Breast epithelium (tissue), 4 donors: ENCODE measurements at regions of chr3 and their contacts with region 1.

Region 1: GRCh38 chr3:54454806-54455205 is 332.5 kb downstream of the CACNA2D3 start:
- DNase-seq: no peak
- H3K4me3 ChIP-seq: no peak overlapping the region
- H3K27ac ChIP-seq: no peak overlapping the region
- H3K4me1 ChIP-seq: no peaks in the 10 kb centered on the region
- H3K27me3 ChIP-seq: no peaks in the 10 kb centered on the region
- CTCF ChIP-seq: no peak
- POLR2A ChIP-seq: no peak

Region 2: GRCh38 chr3:54270816-54271517 is 183.8 kb before region 1 on chr3:
- intact Hi-C with region 1: no loop called
- DNase-seq: no peak
- H3K4me3 ChIP-seq: no peak overlapping the region
- H3K27ac ChIP-seq: no peak overlapping the region
- H3K4me1 ChIP-seq: no peaks in the 10 kb centered on the region
- H3K27me3 ChIP-seq: no peaks in the 10 kb centered on the region
- CTCF ChIP-seq: no peak
- POLR2A ChIP-seq: no peak

Region 3: GRCh38 chr3:54408328-54408727 is 46.5 kb before region 1 on chr3:
- intact Hi-C with region 1: loop called (anchors 2 kb)
- DNase-seq: no peak
- H3K4me3 ChIP-seq: no peak overlapping the region
- H3K27ac ChIP-seq: no peak overlapping the region
- H3K4me1 ChIP-seq: no peaks in the 10 kb centered on the region
- H3K27me3 ChIP-seq: no peaks in the 10 kb centered on the region
- CTCF ChIP-seq: no peak
- POLR2A ChIP-seq: no peak